Caco-2 (cell line): ENCODE measurements at regions of chr9 and their contacts with region 1.

Region 1: GRCh38 chr9:123470121-123470782 is 114.3 kb downstream of the CRB2 start:
- DNase-seq: peak in 1 of 2 experiments; percentile 48
- H3K4me3 ChIP-seq: no peak overlapping the region
- H3K4me3 Mint-ChIP-seq: no peak overlapping the region
- H3K27ac Mint-ChIP-seq: peak overlapping the region; percentile 74
- H3K4me1 ChIP-seq: peaks cover 44% of the 10 kb centered on the region
- H3K4me1 Mint-ChIP-seq: peaks cover 31% of the 10 kb centered on the region
- H3K27me3 ChIP-seq: no peaks in the 10 kb centered on the region
- H3K27me3 Mint-ChIP-seq: no peaks in the 10 kb centered on the region
- CTCF ChIP-seq: no peak

Region 2: GRCh38 chr9:123424131-123424530 is 46.1 kb before region 1 on chr9:
- CTCF ChIA-PET with region 1: no interaction called
- POLR2A ChIA-PET with region 1: no interaction called
- intact Hi-C with region 1: no loop called
- DNase-seq: no peak
- H3K4me3 ChIP-seq: no peak overlapping the region
- H3K4me3 Mint-ChIP-seq: no peak overlapping the region
- H3K27ac Mint-ChIP-seq: no peak overlapping the region
- H3K4me1 ChIP-seq: no peaks in the 10 kb centered on the region
- H3K4me1 Mint-ChIP-seq: peaks cover 6% of the 10 kb centered on the region
- H3K27me3 ChIP-seq: no peaks in the 10 kb centered on the region
- H3K27me3 Mint-ChIP-seq: no peaks in the 10 kb centered on the region
- CTCF ChIP-seq: no peak

Region 3: DNA sequence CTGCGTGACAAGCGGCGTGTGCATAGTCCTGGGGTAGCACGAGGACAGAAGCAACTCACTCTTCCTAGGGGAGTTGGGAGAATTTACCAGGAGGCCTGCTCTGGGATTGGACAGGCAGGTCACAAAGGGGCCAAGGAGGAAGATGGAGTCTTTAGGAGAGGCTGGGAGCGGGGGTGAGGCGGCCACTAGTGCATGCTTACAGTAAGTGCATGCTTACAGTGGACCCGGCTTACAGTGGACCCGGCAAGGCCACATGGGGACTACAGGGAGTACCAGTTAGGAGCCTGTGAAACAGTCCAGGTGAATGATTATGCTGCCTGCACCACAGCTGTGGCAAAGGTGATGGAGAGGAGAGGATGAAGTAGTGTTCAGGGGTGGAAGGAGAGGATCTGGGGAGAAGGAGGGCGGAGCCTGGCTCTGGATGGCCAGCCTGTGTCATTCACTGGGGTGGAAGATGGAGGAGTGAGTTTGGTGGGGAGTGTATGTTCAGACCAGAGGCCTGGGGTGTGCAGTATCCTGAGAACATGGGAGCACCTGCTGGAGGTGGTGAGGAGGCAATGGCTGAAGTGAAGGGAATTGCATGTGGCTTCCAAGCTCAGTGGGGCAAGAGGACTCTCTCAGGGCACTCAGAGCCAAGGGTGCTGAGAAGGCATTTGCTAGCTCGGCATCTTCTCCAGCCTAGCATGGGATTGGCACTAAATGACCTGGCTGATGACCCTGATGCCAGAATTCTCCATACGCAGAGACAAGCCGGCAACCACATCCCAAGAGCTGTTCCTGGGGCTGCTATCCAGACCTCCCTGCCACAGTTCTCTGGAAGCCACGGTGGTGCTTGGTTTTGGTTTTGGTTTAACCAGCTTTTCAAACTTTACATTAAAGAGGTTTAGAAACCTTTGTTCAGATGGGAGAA is 35.4 kb before region 1 on chr9:
- CTCF ChIA-PET with region 1: no interaction called
- POLR2A ChIA-PET with region 1: no interaction called
- intact Hi-C with region 1: no loop called
- DNase-seq: peak; percentile 38 to 51
- H3K4me3 ChIP-seq: no peak overlapping the region
- H3K4me3 Mint-ChIP-seq: no peak overlapping the region
- H3K27ac Mint-ChIP-seq: no peak overlapping the region
- H3K4me1 ChIP-seq: no peaks in the 10 kb centered on the region
- H3K4me1 Mint-ChIP-seq: no peaks in the 10 kb centered on the region
- H3K27me3 ChIP-seq: no peaks in the 10 kb centered on the region
- H3K27me3 Mint-ChIP-seq: no peaks in the 10 kb centered on the region
- CTCF ChIP-seq: peak in 1 of 2 experiments; percentile 17

Region 4: DNA sequence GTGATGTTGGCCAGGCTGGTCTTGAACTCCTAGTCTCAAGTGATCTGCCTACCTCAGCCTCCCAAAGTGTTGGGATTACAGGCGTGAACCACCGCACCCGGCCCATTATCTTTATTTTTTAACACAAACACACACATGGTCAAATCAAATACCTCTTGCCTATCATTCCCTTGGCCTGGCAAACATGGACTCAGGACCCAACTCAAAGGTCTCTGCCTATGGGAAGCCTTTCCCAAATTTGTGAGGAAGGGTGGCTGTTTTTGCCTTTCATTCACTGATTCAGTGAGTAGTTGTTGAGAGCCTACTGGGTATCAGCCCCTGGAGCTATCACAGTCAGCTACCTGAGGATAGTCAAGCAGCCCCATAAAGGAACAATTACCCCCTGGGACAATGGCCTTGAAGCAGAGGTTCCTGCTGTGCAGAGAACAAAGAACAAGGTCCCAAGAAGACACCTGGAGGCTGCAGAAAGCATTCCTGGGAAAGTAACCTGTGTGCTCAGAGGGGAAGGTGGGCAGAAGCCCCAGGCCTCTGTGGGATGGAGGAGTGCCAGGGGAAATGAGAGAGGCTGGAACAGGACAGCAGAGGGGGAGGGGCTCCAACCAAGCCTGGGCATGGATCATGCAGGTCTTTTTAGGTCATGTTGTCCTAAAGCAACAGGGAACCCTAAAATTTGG is 12.2 kb after region 1 on chr9:
- CTCF ChIA-PET with region 1: no interaction called
- POLR2A ChIA-PET with region 1: interaction called, 3 read pairs
- intact Hi-C with region 1: loop called (anchors 1 kb)
- DNase-seq: no peak
- H3K4me3 ChIP-seq: no peak overlapping the region
- H3K4me3 Mint-ChIP-seq: no peak overlapping the region
- H3K27ac Mint-ChIP-seq: peak overlapping the region; percentile 63
- H3K4me1 ChIP-seq: peaks cover 52% of the 10 kb centered on the region
- H3K4me1 Mint-ChIP-seq: peaks cover 27% of the 10 kb centered on the region
- H3K27me3 ChIP-seq: no peaks in the 10 kb centered on the region
- H3K27me3 Mint-ChIP-seq: no peaks in the 10 kb centered on the region
- CTCF ChIP-seq: no peak

Region 5: DNA sequence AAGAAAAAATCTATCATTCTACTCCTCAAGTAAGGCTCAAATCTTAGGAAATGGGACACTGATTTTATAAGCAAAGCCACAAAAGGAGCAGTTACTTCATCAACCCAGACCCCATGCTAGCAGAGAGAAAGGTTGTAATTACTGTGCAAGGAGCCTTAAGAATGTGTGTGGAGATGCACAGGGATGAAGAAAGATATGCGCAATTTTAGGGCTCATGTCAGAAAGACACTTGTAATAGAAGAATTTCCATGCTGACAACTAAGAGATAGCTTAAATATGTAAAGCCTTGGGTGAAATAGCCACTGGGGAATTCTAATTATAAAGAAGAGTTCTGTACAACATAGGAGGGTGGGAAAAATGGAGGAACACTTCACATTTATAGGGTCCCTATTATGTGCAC is 27.6 kb after region 1 on chr9:
- CTCF ChIA-PET with region 1: no interaction called
- POLR2A ChIA-PET with region 1: no interaction called
- intact Hi-C with region 1: loop called (anchors 2 kb)
- DNase-seq: no peak
- H3K4me3 ChIP-seq: no peak overlapping the region
- H3K4me3 Mint-ChIP-seq: no peak overlapping the region
- H3K27ac Mint-ChIP-seq: no peak overlapping the region
- H3K4me1 ChIP-seq: no peaks in the 10 kb centered on the region
- H3K4me1 Mint-ChIP-seq: no peaks in the 10 kb centered on the region
- H3K27me3 ChIP-seq: no peaks in the 10 kb centered on the region
- H3K27me3 Mint-ChIP-seq: no peaks in the 10 kb centered on the region
- CTCF ChIP-seq: no peak